Ascending aorta (tissue), 2 donors: ENCODE measurements at regions of chr3 and their contacts with region 1.

Region 1: DNA sequence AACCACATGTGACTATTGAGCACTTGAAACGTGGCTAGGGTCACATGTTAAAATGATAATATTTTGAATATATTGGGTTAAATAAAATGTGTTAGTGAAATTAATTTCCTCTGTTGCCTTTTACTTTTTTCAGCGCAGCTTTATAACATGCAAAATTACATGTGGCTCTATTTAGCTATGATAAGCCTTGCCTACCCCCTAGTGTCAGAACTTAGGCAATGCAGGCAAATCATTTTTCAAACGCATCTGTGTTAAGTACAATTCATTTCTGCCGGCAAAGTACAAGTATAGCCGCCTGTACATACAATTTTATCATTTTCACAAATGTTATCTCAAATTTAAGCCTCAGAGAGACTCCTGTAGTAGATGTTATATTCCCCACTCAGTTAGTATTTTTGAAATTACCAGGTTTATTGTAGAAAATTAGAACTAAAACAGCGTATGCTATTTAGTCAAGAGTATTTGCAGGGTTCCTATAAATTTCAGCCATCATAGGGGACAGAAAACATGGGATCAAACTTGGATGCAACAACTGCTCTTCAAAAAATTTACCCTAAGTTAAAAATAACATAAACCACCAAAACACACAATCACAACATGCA is 56.1 kb downstream of the TAFA4 start:
- DNase-seq: no peak
- H3K4me3 ChIP-seq: no peak overlapping the region
- H3K27ac ChIP-seq: no peak overlapping the region
- H3K4me1 ChIP-seq: no peaks in the 10 kb centered on the region
- H3K27me3 ChIP-seq: no peaks in the 10 kb centered on the region
- CTCF ChIP-seq: peak; percentile 64 to 85 (median 85)

Region 2: DNA sequence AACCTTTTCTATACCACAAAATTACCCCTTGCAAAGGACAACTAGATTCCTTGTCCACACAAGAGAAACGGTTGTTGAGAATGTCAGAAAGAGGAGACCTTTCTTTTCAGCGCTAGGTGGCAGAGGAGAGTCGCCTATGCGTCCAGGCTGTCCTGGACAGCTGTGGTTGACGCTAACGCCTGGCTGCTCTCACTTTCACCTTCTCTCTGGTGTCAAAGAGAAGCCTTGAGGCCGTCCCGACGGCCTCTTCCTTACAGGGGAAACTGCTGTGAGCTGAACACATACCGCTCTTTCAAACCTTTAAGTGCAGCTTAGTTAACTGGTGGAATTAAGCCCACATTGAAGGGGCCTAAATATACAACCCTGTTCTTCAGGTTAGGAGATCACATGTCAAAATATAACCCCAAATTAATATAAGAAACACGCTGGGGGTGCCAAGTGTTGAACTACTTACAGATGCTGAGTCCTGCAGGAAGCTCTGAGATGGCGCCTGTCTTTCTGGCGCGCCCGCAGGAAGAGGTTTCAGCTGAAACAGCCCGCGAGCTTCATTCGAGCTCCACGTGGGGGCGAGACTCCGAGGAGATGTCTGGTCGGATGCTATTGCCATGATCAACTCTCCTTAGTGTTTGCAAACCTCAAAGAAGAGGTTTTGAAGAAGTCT is 1904.2 kb before region 1 on chr3:
- intact Hi-C with region 1: loop called (anchors 5 kb)
- DNase-seq: peak in 1 of 2 donors; percentile 71
- H3K4me3 ChIP-seq: peak overlapping the region; percentile 41 to 49
- H3K27ac ChIP-seq: no peak overlapping the region
- H3K4me1 ChIP-seq: no peaks in the 10 kb centered on the region
- H3K27me3 ChIP-seq: no peaks in the 10 kb centered on the region
- CTCF ChIP-seq: peak; percentile 45 to 81 (median 67)

Region 3: DNA sequence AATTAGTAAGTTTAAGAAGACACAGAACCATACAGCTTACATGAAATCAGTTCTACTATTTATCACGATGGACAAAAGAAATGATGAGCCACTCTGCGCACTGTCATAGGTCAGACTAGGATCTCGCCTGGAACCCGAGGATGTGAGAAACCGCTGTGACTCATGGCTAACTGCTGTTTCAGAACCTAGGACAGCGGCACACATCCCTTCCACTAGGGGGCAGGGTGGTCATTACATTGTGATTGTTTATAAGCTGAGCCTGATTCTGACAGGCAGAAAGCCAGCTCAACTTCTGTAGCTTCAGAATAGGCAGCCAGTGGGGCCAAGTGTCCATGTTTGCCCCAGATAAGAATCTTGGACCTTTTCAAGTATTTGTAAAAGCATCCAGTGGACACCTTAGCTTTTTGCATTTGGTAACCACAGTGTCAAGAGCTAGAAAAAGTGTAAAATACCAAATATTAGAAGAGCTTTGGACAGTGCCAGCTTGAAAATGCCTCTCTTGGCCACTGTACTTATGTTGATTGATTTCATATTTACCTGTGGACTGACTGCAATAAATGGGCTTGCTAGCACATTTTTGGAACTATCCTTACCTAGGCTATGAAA is 1762.3 kb before region 1 on chr3:
- intact Hi-C with region 1: loop called (anchors 5 kb)
- DNase-seq: peak; percentile 22 to 84
- H3K4me3 ChIP-seq: no peak overlapping the region
- H3K27ac ChIP-seq: no peak overlapping the region
- H3K4me1 ChIP-seq: no peaks in the 10 kb centered on the region
- H3K27me3 ChIP-seq: no peaks in the 10 kb centered on the region
- CTCF ChIP-seq: peak; percentile 51 to 74 (median 71)

Region 4: DNA sequence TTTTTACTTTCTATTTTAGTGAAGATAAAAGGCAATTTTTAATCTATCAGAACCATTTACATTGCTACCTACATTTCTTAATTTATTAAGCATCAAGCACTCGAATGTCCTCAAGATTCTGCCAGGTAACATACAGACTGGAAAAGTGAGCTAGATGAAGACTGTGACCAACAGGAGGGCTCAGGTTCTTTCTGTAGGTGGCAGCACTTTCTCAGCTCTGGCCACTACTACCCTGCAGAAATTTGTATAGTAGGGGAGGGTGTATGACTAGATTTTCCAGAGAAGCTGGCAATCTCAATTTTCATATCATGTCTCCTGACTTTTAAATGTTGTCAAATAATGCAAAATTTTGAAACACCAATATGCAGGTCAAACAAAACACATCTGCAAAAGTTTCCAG is 1056.8 kb before region 1 on chr3:
- intact Hi-C with region 1: loop called (anchors 5 kb)
- DNase-seq: no peak
- H3K4me3 ChIP-seq: no peak overlapping the region
- H3K27ac ChIP-seq: no peak overlapping the region
- H3K4me1 ChIP-seq: peaks cover 0 to 7% of the 10 kb centered on the region in 2 donors
- H3K27me3 ChIP-seq: no peaks in the 10 kb centered on the region
- CTCF ChIP-seq: peak in 2 of 3 experiments; percentile 23 to 42

Region 5: GRCh38 chr3:69020424-69020823 is 144.2 kb after region 1 on chr3:
- intact Hi-C with region 1: no loop called
- DNase-seq: no peak
- H3K4me3 ChIP-seq: no peak overlapping the region
- H3K27ac ChIP-seq: no peak overlapping the region
- H3K4me1 ChIP-seq: no peaks in the 10 kb centered on the region
- H3K27me3 ChIP-seq: no peaks in the 10 kb centered on the region
- CTCF ChIP-seq: peak in 2 of 3 experiments; percentile 12 to 29